ENCODE measurements at regions of chr9 and their contacts with region 1.

Region 1: DNA sequence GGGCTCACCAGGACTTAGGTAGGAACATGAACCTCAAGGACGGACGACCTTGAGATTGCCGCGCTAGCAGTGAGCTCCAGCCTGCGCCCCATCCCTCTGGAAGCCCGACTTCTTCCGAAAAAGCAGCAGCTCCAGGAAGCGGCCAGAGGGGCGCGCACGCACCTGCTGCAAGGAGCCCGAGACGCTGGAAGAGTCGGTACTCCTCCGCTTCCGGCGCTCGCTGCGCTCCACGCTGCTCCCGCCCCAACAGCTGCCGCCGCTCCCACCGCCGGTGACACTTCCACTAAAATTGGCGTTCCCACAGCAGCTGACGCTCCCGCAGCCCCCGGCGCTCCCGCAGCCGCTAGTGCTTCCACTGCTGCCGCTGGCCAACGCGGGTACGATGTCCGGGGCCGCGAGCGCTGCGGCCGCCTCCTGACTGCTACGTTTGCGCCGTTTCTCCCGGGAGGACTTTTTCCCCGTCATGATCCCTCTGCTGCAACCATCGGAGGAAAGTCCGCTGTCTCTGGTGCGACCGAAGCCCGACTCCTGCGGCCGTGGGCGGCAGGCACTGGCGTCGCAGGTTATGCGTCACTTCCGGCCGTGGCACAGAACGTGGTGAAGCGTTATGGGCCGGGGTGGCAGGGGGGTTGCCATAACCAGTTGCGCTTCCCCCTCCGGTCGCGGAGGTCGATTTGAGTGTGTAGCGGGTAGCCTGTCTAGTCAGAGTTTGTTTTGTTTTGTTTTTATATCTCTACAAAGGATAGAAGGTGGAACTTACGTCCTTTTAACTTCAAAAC is at the start of gene CAAP1:
- H3K4me3 ChIP-seq: peak within 1 kb of the TSS; percentile 100
- H3K27ac ChIP-seq: peak within 1 kb of the TSS; percentile 94
- H3K4me1 ChIP-seq: no peaks in the 10 kb centered on the region
- CTCF ChIP-seq: peak; percentile 70

Region 2: DNA sequence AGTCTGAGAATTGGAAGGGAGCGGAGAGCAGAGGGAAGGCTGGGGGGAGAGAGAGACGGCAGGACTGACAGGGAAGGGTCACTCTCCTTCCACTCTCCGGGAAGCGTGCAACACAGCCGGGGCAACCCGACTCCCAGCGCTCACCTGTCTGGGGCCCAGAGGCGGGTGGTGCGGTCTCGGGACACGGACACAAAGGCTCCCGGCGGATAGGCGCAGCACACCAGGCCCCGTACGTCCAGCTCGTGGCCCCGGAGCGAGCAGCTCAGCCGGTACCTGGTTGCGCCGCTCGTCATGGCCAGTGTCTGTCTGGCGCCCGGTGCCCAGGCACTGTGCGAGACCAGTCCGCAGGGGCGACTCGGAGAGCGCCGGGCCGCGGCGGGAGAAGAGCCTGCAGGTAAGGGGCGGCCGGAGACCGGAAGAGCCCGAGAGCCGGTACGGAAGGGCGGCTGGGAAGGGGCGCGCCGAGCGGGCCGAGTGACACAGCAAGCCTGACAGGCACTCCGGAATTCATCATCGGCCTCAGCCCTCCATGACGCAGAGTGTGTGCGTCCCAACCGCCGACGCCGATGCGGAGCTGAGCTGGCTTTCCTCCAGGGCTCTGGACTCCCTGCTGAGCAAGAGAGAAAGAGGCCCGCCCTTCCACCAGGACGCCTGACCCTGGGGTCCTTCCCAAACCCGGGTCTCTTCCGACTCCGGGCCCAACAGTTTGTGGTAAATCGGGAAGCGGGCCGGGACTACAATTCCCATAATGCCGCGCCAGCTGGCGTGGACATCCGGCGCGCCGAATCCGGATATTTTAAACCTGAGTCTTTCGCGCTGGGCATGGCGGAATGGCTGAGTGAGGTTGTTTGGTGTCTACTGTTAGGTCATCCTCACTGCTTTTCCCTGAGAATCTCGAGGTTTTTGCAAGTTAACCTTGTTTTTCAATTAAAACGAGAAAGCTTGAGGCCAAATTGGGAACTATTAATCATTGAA is 54.6 kb after region 1 on chr9 and contains the start of gene PLAA:
- CTCF ChIA-PET with region 1: no interaction called
- POLR2A ChIA-PET with region 1: interaction called, 20 read pairs
- H3K4me3 ChIP-seq: peak within 1 kb of the TSS; percentile 86
- H3K27ac ChIP-seq: peak within 1 kb of the TSS; percentile 97
- H3K4me1 ChIP-seq: peaks cover 7% of the 10 kb centered on the region
- CTCF ChIP-seq: peak; percentile 85

Region 3: DNA sequence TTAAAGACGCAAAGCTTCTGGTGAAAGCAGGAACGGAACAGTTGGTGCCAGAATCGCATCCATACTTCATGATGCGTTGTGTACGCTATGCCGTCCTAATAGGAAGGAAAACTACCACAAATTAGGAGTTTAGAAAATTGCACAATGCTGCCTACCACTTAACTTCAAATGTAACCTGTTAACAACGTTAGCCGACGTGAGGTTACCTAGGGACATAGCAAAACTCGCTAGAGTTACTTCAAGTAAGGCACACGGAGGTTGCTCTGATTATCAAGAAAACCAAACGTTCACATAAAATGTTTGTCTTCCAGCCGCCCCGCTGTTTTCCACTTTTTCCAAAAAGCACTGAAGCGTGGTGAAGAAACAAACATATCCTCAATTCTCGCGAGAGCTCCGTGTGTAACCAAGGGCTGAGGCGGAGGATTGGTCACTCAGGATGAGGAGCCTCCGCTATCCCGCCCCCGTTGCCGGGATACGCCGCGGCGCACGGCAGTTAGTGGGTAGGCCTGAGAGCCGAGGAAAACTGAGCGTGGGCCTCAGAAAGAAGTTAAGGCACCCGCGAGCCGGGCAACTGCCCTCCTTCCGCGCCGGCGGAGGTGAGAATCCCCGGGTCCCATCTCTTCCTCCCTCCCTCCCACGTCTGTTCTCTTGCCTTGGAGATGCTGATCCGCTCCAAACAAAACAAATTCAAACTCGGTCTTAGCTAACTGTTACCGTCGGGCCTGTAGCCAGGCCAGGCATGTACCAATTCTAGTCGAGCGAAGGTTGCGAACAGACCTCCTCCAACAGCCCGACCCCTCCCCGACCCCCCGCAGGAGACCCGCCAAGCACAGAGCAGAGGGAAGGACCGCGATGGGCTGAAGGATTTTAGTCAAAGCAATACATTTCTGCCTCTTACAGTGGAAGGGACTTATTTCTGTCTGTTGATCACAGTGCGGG is 63.8 kb after region 1 on chr9 and contains the start of gene IFT74:
- CTCF ChIA-PET with region 1: interaction called, 5 read pairs
- POLR2A ChIA-PET with region 1: interaction called, 15 read pairs
- H3K4me3 ChIP-seq: peak within 1 kb of the TSS; percentile 70
- H3K27ac ChIP-seq: peak within 1 kb of the TSS; percentile 97
- H3K4me1 ChIP-seq: peaks cover 9% of the 10 kb centered on the region
- CTCF ChIP-seq: no peak

Region 4: DNA sequence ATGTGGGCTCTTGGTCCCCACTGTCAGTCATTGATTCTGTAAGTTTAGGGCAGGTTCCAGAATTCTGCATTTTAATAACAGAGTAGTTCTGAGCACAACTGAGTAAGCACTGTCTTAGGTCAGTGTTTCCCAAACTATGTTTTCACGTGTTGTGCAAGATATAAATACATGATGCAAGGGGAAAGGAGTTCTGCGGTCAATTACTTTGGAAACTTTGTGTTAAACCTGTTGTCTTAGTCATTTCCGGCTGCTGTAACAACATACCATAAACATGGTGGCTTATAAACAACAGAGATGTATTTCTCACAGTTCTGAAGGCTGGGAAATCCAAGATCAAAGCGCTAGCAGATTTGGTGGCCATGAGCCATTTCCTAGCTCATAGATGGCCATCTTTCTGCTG is 334.8 kb after region 1 on chr9:
- CTCF ChIA-PET with region 1: no interaction called
- POLR2A ChIA-PET with region 1: no interaction called
- H3K4me3 ChIP-seq: no peak overlapping the region
- H3K27ac ChIP-seq: no peak overlapping the region
- H3K4me1 ChIP-seq: no peaks in the 10 kb centered on the region
- CTCF ChIP-seq: no peak

Measured in HEK293 (cell line).